ENCODE measurements at regions of chr20 and their contacts with region 1.

Region 1: GRCh38 chr20:43767686-43768474 is 41.1 kb upstream of the GTSF1L start:
- DNase-seq: no peak
- ATAC-seq: peak in 7 of 8 donors; percentile 43 to 78 (median 65)
- H3K4me3 ChIP-seq: no peak overlapping the region
- H3K27ac ChIP-seq: no peak overlapping the region
- H3K4me1 ChIP-seq: peaks cover 0 to 15% (median 7%) of the 10 kb centered on the region in 9 donors
- H3K27me3 ChIP-seq: peaks cover 0 to 51% (median 0%) of the 10 kb centered on the region in 7 donors
- CTCF ChIP-seq: no peak

Region 2: DNA sequence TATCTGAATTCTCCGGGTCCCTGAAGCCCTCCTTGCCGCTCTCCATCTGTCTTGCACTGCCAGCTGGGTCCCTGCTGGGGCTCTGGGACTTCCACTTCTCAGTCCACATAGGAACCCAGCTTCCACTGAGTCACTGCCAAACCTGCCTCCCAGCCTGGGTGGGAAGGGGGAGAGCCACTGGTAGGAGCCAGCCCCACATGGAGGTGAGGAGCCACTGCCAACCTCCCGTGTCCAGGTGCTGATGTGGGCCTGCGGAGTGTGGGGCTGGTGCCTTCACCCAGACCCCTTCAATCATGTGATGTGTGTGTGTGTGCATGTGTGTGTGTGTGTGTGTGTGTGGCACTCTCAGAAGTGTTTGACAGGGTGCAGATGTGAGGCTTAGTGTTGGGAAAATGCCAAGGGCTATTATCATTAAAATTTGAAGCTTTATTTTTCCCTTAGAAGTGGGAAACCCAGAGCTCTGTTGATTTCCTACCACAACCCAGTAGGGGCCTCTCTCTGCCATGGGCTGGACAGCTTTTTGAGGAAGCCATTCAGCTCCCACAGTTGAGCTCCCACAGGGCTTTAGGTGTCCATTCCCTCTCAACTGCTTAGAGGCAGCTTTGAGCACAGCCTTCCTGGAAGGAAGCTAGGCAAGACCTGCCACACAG is 218.3 kb before region 1 on chr20:
- intact Hi-C with region 1: no loop called
- DNase-seq: no peak
- ATAC-seq: no peak
- H3K4me3 ChIP-seq: no peak overlapping the region
- H3K27ac ChIP-seq: no peak overlapping the region
- H3K4me1 ChIP-seq: no peaks in the 10 kb centered on the region
- H3K27me3 ChIP-seq: no peaks in the 10 kb centered on the region
- CTCF ChIP-seq: no peak

Region 3: GRCh38 chr20:43799150-43799711 is 31.4 kb after region 1 on chr20:
- intact Hi-C with region 1: no loop called
- DNase-seq: no peak
- ATAC-seq: no peak
- H3K4me3 ChIP-seq: no peak overlapping the region
- H3K27ac ChIP-seq: no peak overlapping the region
- H3K4me1 ChIP-seq: no peaks in the 10 kb centered on the region
- H3K27me3 ChIP-seq: peaks cover 0 to 23% (median 9%) of the 10 kb centered on the region in 7 donors
- CTCF ChIP-seq: no peak

Region 4: DNA sequence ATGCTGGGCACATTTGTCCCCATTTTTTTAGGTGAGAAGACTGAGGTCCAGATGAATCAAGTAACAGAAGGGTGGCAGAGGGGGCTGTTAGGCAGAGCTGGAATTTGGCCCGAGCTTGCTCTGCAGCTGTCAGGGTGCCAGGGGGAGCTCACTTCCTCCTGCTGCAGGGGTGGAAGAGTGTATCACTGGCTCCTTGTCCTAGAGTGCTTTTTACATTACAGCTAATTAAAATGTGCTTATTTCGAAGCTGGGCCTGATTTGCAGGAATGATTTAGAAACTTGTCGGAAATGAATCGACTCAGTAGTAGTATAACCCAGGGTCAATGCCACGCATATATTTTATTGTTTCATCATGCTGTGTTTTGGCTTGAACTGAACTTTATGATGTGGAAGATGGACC is 157.9 kb after region 1 on chr20:
- intact Hi-C with region 1: loop called in 1 of 10 experiments (anchors 10 kb)
- DNase-seq: peak in 1 of 2 donors; percentile 38
- ATAC-seq: peak in 2 of 8 donors; percentile 18 to 50
- H3K4me3 ChIP-seq: no peak overlapping the region
- H3K27ac ChIP-seq: no peak overlapping the region
- H3K4me1 ChIP-seq: peaks cover 0 to 10% (median 0%) of the 10 kb centered on the region in 9 donors
- H3K27me3 ChIP-seq: peaks cover 0 to 59% (median 31%) of the 10 kb centered on the region in 7 donors
- CTCF ChIP-seq: peak in 1 of 9 donors; percentile 21

Region 5: GRCh38 chr20:44001667-44002596 is 234.1 kb after region 1 on chr20:
- intact Hi-C with region 1: loop called in 1 of 10 experiments (anchors 10 kb)
- DNase-seq: no peak
- ATAC-seq: peak in 1 of 8 donors; percentile 41
- H3K4me3 ChIP-seq: no peak overlapping the region
- H3K27ac ChIP-seq: no peak overlapping the region
- H3K4me1 ChIP-seq: no peaks in the 10 kb centered on the region
- H3K27me3 ChIP-seq: no peaks in the 10 kb centered on the region
- CTCF ChIP-seq: no peak

Region 6: GRCh38 chr20:44137210-44137801 is 369.4 kb after region 1 on chr20:
- intact Hi-C with region 1: no loop called
- DNase-seq: peak; percentile 68 to 72
- ATAC-seq: peak; percentile 66 to 85 (median 77)
- H3K4me3 ChIP-seq: no peak overlapping the region
- H3K27ac ChIP-seq: peak overlapping the region; percentile 29 to 91 (median 88)
- H3K4me1 ChIP-seq: peaks cover 9 to 74% (median 41%) of the 10 kb centered on the region in 9 donors
- H3K27me3 ChIP-seq: peaks cover 0 to 4% (median 0%) of the 10 kb centered on the region in 7 donors
- CTCF ChIP-seq: no peak

Measured in heart right ventricle (tissue), 16 donors.